Heart left ventricle (tissue), 16 donors: ENCODE measurements at regions of chr2 and their contacts with region 1.

Region 1: GRCh38 chr2:28821295-28821958 is 10.8 kb downstream of the SPDYA start:
- DNase-seq: peak in 2 of 5 donors; percentile 18 to 25
- ATAC-seq: peak in 3 of 4 donors; percentile 60 to 69 (median 67)
- H3K4me3 ChIP-seq: no peak overlapping the region
- H3K27ac ChIP-seq: no peak overlapping the region
- H3K4me1 ChIP-seq: peaks cover 0 to 3% (median 0%) of the 10 kb centered on the region in 12 donors
- H3K27me3 ChIP-seq: no peaks in the 10 kb centered on the region
- CTCF ChIP-seq: peak; percentile 51 to 76 (median 66)
- POLR2A ChIP-seq: no peak

Region 2: DNA sequence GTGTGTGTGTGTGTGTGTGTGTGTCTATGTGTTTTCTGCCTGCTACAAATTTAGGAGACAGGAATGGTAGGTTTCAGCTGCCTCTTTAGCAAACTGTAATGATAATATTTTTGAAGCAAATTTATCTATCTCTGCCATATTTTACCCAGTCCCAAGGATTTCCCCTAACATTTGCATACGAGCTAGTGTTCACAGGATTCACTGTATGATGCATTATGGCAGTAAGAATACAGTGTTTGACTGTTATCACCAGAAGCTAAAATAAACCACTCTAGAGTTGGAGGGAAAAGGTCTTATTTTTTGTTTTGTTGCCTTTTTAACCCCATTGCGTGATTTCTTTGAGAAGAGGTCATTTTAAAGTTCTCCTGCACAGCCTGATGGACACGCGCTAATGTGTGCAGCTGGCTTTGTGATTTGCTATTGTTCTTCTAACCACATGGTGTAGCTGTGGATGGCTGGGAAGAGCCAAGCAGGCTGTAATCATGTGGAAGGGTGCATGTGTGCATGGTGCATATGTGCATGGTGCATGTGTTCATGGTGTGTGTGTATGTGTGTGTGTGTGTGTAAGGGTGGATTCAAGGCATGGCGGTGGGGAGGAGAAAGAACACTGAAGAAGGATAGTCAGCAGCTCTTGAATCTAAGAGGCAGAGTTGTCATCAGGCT is 263.1 kb before region 1 on chr2:
- intact Hi-C with region 1: no loop called
- DNase-seq: no peak
- ATAC-seq: peak in 1 of 4 donors; percentile 18
- H3K4me3 ChIP-seq: no peak overlapping the region
- H3K27ac ChIP-seq: no peak overlapping the region
- H3K4me1 ChIP-seq: no peaks in the 10 kb centered on the region
- H3K27me3 ChIP-seq: no peaks in the 10 kb centered on the region
- CTCF ChIP-seq: no peak
- POLR2A ChIP-seq: no peak

Region 3: GRCh38 chr2:29196792-29197788 is 375.7 kb after region 1 on chr2:
- intact Hi-C with region 1: loop called in 2 of 10 experiments (anchors 5 to 10 kb)
- DNase-seq: peak; percentile 46 to 75 (median 59)
- ATAC-seq: peak; percentile 67 to 88 (median 86)
- H3K4me3 ChIP-seq: no peak overlapping the region
- H3K27ac ChIP-seq: no peak overlapping the region
- H3K4me1 ChIP-seq: peaks cover 0 to 8% (median 0%) of the 10 kb centered on the region in 12 donors
- H3K27me3 ChIP-seq: no peaks in the 10 kb centered on the region
- CTCF ChIP-seq: peak; percentile 66 to 82 (median 76)
- POLR2A ChIP-seq: no peak